Left lung (tissue), 14 donors: ENCODE measurements at regions of chr2 and their contacts with region 1.

Region 1: GRCh38 chr2:64144057-64145013 is at the start of gene PELI1:
- DNase-seq: peak; percentile 91 to 97 (median 96)
- ATAC-seq: peak; percentile 97
- H3K4me3 ChIP-seq: peak within 1 kb of the TSS; percentile 84 to 85
- H3K27ac ChIP-seq: peak within 1 kb of the TSS; percentile 98 to 99
- H3K4me1 ChIP-seq: peaks cover 0 to 36% of the 10 kb centered on the region in 2 donors
- H3K27me3 ChIP-seq: no peaks in the 10 kb centered on the region
- CTCF ChIP-seq: no peak
- polyA plus RNA-seq, gene PELI1: 32.0 to 37.8 (median 33.8) TPM

Region 2: GRCh38 chr2:64062829-64063228 is 81.5 kb before region 1 on chr2:
- intact Hi-C with region 1: loop called in 1 of 2 experiments (anchors 5 kb)
- DNase-seq: peak in 1 of 4 donors; percentile 37
- ATAC-seq: peak; percentile 84
- H3K4me3 ChIP-seq: no peak overlapping the region
- H3K27ac ChIP-seq: peak overlapping the region; percentile 16 to 77
- H3K4me1 ChIP-seq: peaks cover 15 to 17% of the 10 kb centered on the region in 2 donors
- H3K27me3 ChIP-seq: no peaks in the 10 kb centered on the region
- CTCF ChIP-seq: no peak